ENCODE measurements at regions of chr5 and their contacts with region 1.

Region 1: GRCh38 chr5:137754126-137754960 is at the start of gene HNRNPA0:
- DNase-seq: peak; percentile 97 to 98
- ATAC-seq: peak; percentile 93 to 94
- H3K4me3 ChIP-seq: peak within 1 kb of the TSS; percentile 78
- H3K27ac ChIP-seq: peak within 1 kb of the TSS; percentile 92 to 97
- H3K4me1 ChIP-seq: peaks cover 37% of the 10 kb centered on the region
- CTCF ChIP-seq: no peak
- EP300 ChIP-seq: no peak
- POLR2A ChIP-seq: peak; percentile 92
- RAD21 ChIP-seq: no peak
- polyA plus RNA-seq, gene HNRNPA0: 13.6 and 17.0 TPM in 2 replicates

Region 2: DNA sequence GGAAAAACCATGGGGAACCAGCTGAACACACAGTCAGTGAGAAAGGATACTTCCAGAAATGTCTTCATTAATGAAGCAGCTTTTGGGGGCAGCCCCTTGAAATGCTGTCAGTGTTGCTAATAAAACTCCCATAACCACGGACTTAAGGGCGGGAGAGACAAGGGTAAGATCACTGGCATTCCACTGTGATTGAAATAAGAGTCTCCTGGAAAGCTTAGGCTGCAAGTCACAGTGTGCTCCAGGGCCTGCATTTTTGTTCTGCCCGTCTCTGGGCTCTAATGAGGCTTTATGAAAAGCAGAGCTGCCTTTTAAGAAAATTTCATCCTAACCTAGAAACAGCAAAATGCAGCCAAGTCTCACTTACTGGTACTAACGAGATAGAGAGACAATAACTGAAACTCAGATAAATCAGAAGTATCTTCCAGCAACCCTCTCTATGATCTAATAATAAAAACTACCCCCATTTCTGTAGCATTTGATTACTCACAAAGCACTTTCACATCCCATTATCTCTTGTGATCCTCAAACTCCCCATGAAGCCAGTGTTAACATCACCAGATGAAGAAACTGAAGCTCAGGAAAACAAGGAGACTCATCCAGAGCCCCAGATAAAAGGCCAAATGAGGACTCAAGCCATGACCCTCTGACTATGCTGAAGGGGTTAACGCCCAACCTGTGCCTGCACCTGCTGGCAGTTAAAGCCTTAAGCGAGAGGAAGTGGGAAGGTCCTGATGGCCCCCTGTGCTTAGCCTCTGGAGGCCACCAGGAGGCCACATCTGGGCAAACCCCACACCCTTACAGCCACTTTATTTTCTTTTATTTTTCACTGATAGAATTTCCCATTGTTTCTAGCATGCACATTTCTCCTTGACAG is 292.7 kb before region 1 on chr5:
- CTCF ChIA-PET with region 1: no interaction called
- POLR2A ChIA-PET with region 1: no interaction called
- DNase-seq: no peak
- ATAC-seq: peak; percentile 68 to 70; a peak in 4 of 6 replicates
- H3K4me3 ChIP-seq: no peak overlapping the region
- H3K27ac ChIP-seq: no peak overlapping the region
- H3K4me1 ChIP-seq: no peaks in the 10 kb centered on the region; the same call in 2 of the 3 replicates
- CTCF ChIP-seq: no peak
- EP300 ChIP-seq: no peak
- POLR2A ChIP-seq: no peak
- RAD21 ChIP-seq: no peak

Region 3: DNA sequence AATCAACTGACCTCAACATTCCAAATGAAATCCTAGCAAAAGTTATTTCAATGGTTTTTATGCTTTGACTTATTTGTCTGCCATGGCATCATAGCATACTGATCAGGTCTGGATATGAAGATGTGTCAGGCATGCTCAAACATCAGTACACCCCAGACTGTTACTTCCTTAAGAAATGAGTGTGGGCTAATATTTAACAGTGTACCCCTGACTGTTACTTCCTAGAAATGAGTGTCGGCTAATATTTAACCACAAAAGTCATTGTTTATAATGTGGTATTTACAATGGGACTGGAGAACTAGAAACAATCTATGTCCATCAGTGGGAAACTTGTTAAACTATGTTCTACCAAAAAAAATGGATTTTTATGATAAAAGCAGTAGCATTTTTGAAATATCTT is 38.0 kb after region 1 on chr5:
- CTCF ChIA-PET with region 1: no interaction called
- POLR2A ChIA-PET with region 1: no interaction called
- DNase-seq: peak in 1 of 2 experiments; percentile 59
- ATAC-seq: peak; percentile 76 to 94; a peak in 5 of 6 replicates
- H3K4me3 ChIP-seq: no peak overlapping the region
- H3K27ac ChIP-seq: peak overlapping the region; percentile 67 to 78
- H3K4me1 ChIP-seq: peaks cover 34% of the 10 kb centered on the region
- CTCF ChIP-seq: no peak
- EP300 ChIP-seq: no peak
- POLR2A ChIP-seq: no peak
- RAD21 ChIP-seq: no peak

Region 4: GRCh38 chr5:137822158-137822764 is 67.9 kb after region 1 on chr5:
- CTCF ChIA-PET with region 1: interaction called, 11 read pairs
- POLR2A ChIA-PET with region 1: interaction called, 3 read pairs
- DNase-seq: peak; percentile 69 to 73
- ATAC-seq: peak; percentile 92 to 95
- H3K4me3 ChIP-seq: no peak overlapping the region
- H3K27ac ChIP-seq: no peak overlapping the region
- H3K4me1 ChIP-seq: peaks cover 26% of the 10 kb centered on the region
- CTCF ChIP-seq: peak; percentile 74
- EP300 ChIP-seq: no peak
- POLR2A ChIP-seq: no peak
- RAD21 ChIP-seq: peak; percentile 84 to 94

Region 5: DNA sequence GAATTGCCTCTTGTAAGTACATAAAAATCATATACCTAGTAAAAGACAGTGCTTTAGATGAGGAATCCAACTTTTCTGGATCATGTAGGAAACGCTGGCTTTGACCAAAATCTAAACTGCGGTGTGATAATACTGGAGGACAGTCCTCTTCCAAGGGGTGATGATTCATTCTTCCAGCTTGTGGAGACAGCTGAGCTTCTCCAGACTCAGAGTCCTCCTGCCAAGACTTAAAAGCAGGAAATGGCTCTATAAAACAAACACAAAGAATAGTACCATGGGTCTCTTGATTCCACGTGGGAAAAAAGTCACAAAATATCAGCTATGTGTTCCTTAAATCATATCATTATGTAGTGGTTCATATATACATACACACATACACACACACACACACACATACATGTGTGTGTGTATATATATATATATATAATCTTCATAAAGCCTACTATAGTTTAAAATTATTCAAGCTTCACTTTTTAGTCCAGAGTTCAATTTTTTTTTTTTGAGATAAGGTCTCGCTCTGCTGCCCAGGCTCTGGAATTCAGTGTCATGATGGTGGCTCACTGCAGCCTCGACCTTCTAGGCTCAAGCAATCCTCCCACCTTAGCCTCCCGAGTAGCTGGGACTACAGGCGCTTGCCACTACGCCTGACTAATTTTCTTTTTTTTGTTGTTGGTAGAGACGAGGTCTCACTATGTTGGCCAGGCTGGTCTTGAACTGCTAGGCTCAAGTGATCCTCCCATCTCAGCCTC is 200.0 kb after region 1 on chr5:
- CTCF ChIA-PET with region 1: no interaction called
- POLR2A ChIA-PET with region 1: interaction called, 11 read pairs
- DNase-seq: peak; percentile 55 to 73
- ATAC-seq: peak; percentile 97
- H3K4me3 ChIP-seq: 0 out of 3 replicates have a peak overlapping the region, but pooled peaks have one; percentile 11
- H3K27ac ChIP-seq: peak overlapping the region; percentile 60 to 81
- H3K4me1 ChIP-seq: peaks cover 22% of the 10 kb centered on the region
- CTCF ChIP-seq: no peak
- EP300 ChIP-seq: no peak
- POLR2A ChIP-seq: no peak
- RAD21 ChIP-seq: no peak

Region 6: GRCh38 chr5:138024117-138024516 is 269.8 kb after region 1 on chr5:
- CTCF ChIA-PET with region 1: no interaction called
- POLR2A ChIA-PET with region 1: no interaction called
- DNase-seq: no peak
- ATAC-seq: peak in 1 of 2 experiments; percentile 54; a peak in 3 of 6 replicates
- H3K4me3 ChIP-seq: no peak overlapping the region
- H3K27ac ChIP-seq: 0 out of 6 replicates have a peak overlapping the region, but pooled peaks of 1 of the 2 experiments have one; percentile 9
- H3K4me1 ChIP-seq: peaks cover 16% of the 10 kb centered on the region
- CTCF ChIP-seq: no peak
- EP300 ChIP-seq: no peak
- POLR2A ChIP-seq: no peak
- RAD21 ChIP-seq: no peak

Measured in A549 (cell line).